AG04449 (cell line): ENCODE measurements at regions of chr1 and their contacts with region 1.

Region 1: GRCh38 chr1:25796811-25797458 is 3.1 kb upstream of the SELENON start:
- DNase-seq: no peak
- H3K4me3 ChIP-seq: no peak overlapping the region
- CTCF ChIP-seq: peak; percentile 87

Region 2: DNA sequence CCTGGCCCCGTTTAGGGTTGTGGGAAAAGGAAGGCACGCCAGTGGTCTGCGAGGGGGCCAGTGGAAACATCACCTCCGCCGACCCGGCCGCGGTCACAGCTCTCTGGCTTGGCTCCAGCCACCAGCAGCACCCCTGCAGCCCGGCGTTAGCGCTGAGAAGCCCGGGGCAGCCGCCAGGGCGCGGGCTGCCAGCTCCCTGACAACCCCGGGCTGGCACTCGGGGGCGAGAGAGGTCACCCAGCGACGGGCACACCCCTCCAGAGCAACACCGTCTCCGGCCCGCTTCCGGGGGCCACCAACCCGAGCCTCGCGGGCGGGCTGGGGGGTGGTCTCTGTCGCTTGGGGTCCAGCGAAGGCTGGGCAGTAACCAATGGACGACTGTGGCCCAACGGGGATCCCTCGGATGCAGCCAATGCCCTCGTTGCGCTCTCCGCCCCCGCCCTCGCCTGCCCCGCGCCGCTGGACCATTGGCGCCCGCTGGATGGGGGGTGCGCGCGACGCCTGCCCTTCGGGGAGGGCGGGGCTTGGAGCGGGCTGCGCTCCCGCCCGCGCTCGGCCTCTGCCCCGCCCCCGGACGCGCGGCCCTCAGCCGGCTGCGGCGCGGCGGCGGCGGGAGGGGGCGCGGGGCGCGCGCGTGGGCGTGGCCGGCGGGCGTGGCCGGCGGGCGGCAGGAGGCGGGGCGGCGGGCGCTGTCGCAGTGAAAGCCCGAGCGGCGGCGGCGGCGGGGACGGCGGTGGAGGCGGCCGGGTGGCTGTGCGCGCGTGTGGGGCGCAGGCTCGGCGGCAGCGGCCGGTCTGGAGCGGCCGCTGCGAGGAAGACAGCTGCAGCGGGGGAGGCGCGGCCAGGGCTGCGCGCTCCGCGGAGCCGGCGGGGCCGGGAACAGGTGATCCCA is 180.6 kb before region 1 on chr1 and contains the start of gene MAN1C1:
- CTCF ChIA-PET with region 1: interaction called, 468 read pairs
- POLR2A ChIA-PET with region 1: no interaction called
- DNase-seq: no peak
- H3K4me3 ChIP-seq: peak within 1 kb of the TSS; percentile 57
- CTCF ChIP-seq: peak; percentile 26

Region 3: DNA sequence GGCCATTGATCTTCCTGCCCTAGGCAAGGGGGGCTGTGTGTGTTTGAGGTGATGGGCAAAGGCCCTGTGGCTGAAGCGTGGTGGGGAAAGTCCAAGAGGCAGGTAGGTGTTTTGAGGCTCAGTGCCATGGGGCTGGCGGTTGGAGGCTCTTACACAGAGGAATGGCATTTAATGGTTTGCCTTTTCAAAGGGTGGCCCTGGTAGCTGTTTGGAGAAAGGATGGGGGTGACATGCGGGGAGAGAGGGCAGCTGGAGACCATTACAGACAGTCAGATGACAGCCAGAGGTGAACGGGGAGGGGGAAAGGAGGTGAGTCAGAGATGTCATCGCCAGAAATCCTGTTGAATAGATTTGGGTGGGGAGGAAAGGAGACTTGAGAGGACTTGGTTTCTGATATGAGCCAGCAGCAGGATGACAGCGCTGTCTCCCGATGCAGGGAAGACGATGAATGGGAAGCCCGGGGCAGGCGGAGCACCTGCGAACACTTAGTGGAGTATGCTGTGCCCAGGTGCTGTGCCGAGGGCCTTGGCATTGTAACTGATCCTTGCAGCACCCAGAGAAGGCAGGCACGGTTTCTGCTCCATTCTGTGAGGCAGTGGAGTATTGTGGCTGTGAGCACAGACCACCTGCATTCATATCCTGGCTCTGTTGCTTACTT is 124.0 kb before region 1 on chr1:
- CTCF ChIA-PET with region 1: no interaction called
- POLR2A ChIA-PET with region 1: no interaction called
- DNase-seq: no peak
- H3K4me3 ChIP-seq: no peak overlapping the region
- CTCF ChIP-seq: no peak

Region 4: DNA sequence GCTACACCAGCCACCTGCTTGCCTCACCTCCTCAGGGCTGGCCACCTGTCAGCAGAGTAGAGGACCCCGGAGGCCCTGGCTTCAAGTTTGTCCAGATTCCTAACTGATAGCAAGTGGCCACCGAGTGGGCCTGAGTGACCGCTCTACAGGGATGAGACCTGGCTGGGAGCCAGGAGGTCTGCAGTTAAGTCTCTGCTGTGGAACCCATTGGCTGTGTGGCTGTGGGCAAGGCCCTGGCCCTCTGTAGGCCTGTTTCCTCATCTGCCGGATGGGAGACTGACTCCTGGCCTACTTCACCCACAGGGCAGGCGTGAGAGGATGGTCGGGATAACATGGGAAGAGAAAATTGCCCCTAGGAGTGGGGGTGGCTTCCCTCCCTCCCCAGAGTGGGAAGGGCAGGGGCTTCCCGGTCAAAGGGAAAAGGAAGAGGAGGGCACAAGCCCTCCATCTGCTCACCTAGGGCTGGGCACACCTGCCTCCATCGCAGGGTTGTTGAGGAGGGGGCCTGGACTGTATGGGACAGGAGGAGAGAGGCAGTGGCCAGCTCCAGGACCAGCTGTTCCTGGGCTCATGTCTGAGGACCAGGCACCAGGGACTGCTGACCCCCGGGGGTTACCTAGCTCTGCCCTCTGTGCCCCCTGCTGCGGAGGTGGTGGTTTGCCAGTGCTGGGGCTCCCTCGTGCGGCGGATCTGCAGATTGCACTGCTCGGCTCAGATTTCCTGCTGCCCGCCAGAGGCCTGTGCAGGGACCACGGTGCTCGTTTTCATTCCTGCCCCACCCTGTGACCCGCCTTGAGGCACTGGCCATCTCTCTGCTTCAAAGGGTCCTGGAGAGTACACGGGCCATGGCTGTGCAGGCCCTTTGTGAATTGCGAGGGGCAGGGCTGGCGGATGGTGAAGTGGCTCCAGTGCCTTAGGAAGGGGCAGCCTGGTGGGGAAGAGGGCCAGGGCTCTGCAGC is 13.7 kb after region 1 on chr1:
- CTCF ChIA-PET with region 1: interaction called, 77 read pairs
- POLR2A ChIA-PET with region 1: interaction called, 9 read pairs
- DNase-seq: no peak
- H3K4me3 ChIP-seq: no peak overlapping the region
- CTCF ChIP-seq: peak; percentile 95